Posterior cingulate gyrus (tissue), 11 donors: ENCODE measurements at regions of chr18 and their contacts with region 1.

Region 1: DNA sequence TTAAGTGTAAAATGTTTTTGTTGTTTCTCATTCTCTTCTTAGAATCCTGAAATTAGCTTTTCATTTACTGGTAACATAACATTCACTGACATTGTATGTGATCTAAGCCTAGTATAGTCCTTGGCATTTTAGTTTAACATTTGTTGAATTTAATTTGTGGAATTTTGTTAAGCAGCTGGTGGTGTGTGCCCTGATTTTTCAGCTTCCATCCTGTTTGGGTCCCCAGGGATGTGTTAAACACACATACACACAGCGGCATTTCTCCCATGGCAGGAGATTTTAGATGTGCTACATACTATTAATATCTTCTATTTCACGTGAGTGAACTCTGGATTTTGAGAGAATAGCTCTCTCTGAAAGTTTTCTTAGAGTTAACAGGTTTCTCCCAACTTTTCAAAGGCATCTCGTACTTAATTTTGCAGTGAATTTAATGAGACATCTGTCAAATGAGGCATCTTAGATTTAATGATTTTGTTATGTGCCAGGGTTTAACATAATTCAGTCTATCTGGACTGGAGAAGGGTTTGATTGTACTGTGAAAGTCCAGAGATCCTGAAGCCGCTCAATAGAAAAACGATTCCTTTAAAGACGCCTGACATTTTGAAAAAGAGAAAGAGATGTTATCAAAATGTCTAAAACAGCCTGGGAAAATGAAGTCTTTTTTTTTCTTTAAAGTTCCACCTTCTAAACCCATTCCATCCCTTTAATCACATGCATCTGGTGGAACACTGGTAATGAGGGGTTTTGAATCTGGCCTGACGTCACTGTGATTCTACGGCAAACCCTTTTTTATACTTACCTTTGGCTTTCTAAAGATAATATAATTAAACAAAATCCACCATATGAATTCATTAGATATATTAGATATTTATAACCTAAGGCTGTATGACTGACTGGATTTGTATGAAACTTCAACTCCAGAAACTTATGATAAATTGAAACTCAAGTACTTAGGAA is 6.8 kb downstream of the PHLPP1 start:
- DNase-seq: no peak

Region 2: GRCh38 chr18:62784966-62785413 is 62.9 kb after region 1 on chr18:
- intact Hi-C with region 1: loop called (anchors 5 kb)
- DNase-seq: peak in 6 of 10 donors; percentile 38 to 82 (median 57)

Region 3: DNA sequence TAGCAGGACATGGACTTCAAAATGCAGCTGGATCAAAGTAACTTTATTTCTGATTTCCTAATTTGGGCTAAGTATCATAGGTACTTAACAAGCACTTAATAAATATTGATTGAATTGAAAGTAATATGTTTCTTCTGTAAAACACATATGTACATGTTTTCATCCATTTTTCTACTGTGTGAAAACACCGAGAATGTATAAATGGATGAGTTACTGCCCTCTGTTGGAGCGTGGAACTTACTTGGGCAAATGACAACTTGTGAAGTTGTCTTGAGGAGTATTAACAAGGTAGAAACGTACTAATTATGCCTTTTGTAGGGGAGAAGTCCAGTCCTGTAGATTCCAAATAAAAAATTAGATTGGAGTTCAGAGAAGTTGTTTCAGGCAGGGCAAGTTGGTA is 80.4 kb after region 1 on chr18:
- intact Hi-C with region 1: loop called (anchors 5 kb)
- DNase-seq: no peak